ENCODE measurements at regions of chr17 and their contacts with region 1.

Region 1: DNA sequence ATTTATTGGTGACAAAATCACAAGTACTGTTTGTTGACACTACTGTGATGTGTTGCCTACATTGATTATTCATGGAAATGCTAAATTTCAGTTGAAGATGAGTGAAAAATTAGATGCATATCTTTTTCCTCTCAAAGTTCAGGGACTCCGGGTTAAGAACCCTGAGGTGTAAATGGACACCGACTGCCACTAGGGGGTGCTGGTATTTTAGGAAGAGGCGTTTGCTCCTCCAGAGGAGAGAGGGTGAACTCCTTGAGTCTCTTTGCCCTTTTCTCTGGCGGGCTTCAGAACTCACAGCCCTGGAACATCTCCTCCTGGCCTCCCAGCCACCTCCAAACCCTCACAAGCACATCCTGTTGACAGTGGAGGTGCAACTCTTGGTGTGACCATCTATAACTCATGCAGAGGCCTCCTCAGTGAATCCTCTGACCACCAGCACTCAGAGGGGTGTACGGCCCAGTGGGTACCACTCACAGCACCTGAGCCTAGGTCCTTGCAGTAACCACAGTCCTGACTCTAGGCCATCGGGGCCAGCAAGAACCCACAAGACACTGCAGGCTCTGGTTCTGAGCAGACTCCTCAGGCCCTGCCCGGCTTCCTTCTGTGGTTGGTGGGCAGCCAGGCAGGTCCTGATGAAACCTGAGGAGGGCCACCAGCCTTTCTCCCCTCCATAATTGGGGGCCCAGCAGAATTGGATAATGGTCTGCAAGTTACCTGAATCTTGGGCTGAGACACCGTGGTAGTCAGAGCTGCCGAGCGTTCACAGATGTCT is 26.2 kb upstream of the PIK3R5 start:
- DNase-seq: peak; percentile 64 to 71 (median 70)
- ATAC-seq: peak; percentile 63
- H3K4me3 ChIP-seq: no peak overlapping the region
- H3K27ac ChIP-seq: no peak overlapping the region
- H3K4me1 ChIP-seq: no peaks in the 10 kb centered on the region
- H3K27me3 ChIP-seq: no peaks in the 10 kb centered on the region
- CTCF ChIP-seq: peak; percentile 45 to 81 (median 74)
- POLR2A ChIP-seq: no peak

Region 2: DNA sequence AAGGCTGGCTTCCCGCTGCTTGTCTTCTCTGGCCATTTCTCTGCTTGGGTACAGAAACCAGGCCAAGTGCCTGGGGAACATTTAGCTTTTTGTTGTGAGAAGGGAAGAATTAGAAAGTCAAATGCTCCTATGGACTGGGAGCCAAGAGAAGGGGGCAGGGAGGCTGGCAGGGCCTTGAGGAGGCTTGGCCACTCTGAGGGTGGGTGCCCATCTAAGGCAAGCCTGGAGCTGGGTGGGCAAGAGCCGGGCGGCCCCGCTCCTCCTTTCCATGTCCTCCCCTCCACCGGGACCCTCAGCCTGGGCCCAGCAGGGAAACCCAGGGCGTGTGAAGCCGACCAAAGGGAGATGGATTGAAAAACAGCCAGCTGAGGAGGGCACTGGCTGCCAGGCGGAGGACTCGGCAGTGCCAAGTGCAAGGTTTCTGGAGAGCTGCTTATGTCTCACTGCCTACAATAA is 99.0 kb after region 1 on chr17:
- intact Hi-C with region 1: no loop called
- DNase-seq: no peak
- ATAC-seq: no peak
- H3K4me3 ChIP-seq: no peak overlapping the region
- H3K27ac ChIP-seq: no peak overlapping the region
- H3K4me1 ChIP-seq: peaks cover 5% of the 10 kb centered on the region
- H3K27me3 ChIP-seq: no peaks in the 10 kb centered on the region
- CTCF ChIP-seq: no peak
- POLR2A ChIP-seq: no peak

Region 3: GRCh38 chr17:9256751-9257629 is 265.3 kb after region 1 on chr17:
- intact Hi-C with region 1: no loop called
- DNase-seq: no peak
- ATAC-seq: no peak
- H3K4me3 ChIP-seq: no peak overlapping the region
- H3K27ac ChIP-seq: no peak overlapping the region
- H3K4me1 ChIP-seq: no peaks in the 10 kb centered on the region
- H3K27me3 ChIP-seq: no peaks in the 10 kb centered on the region
- CTCF ChIP-seq: no peak
- POLR2A ChIP-seq: no peak

Region 4: DNA sequence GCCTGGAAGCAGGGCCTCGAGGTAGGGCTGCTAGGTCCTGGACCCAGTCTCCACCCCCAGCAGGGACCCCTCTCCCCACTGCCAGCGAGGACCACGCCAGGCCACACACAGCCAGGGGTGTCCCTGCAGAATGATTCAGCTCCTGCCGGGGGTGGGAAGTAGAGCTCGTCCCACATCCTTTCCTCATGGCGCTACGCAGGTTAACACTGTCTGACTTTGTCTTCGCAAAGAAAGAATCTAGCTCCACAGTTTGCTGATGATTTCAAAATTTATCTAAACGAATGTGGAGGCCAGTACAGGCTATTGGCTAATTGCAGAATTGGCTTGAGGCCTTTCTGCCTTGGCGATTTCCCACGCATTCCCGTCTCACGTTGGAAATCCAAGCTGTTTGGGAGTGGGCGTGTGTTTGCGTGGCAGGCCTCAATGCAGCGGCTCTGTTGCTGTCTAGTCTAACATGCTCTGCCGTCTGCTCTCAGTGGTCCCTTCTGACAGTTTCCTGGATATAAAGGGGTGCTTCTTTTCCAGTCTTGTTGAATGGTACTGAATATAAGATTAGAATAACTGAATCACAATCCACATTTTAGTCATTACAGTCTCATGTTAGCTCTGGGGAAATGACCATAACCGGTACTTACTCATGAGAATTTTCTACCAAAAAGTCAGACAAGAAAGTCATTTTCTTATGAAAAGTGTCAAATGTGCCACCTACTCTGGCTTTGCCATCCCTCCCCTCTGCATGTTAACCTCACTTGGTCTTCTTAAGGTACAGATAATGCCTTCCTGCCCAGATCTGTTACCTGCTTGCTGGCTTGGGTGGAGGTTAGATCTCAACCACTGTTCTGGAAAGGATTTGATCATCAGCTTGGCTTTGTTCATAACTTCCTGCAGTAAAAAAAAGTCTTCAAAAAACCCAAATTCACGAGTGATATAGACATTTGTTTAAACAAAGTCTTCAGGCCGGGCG is 282.0 kb after region 1 on chr17:
- intact Hi-C with region 1: loop called (anchors 10 kb)
- DNase-seq: peak in 1 of 4 donors; percentile 4
- ATAC-seq: no peak
- H3K4me3 ChIP-seq: no peak overlapping the region
- H3K27ac ChIP-seq: no peak overlapping the region
- H3K4me1 ChIP-seq: no peaks in the 10 kb centered on the region
- H3K27me3 ChIP-seq: no peaks in the 10 kb centered on the region
- CTCF ChIP-seq: no peak
- POLR2A ChIP-seq: no peak

Region 5: GRCh38 chr17:9522074-9522473 is 530.4 kb after region 1 on chr17:
- intact Hi-C with region 1: loop called (anchors 10 kb)
- DNase-seq: peak in 2 of 4 donors; percentile 18 to 21
- ATAC-seq: no peak
- H3K4me3 ChIP-seq: no peak overlapping the region
- H3K27ac ChIP-seq: no peak overlapping the region
- H3K4me1 ChIP-seq: no peaks in the 10 kb centered on the region
- H3K27me3 ChIP-seq: no peaks in the 10 kb centered on the region
- CTCF ChIP-seq: peak in 6 of 7 experiments; percentile 17 to 57 (median 47)
- POLR2A ChIP-seq: no peak